Common myeloid progenitor, CD34-positive (primary cell): ENCODE measurements at regions of chr1 and their contacts with region 1.

Region 1: GRCh38 chr1:113140588-113141446 is 67.8 kb downstream of the LRIG2 start:
- DNase-seq: peak; percentile 60 to 79 (median 74)
- H3K4me3 ChIP-seq: peak overlapping the region in 5 of 7 experiments; percentile 12 to 70 (median 34)
- H3K27ac ChIP-seq: no peak overlapping the region
- H3K4me1 ChIP-seq: peaks cover 0 to 12% (median 8%) of the 10 kb centered on the region in 4 experiments
- H3K27me3 ChIP-seq: peaks cover 0 to 2% (median 0%) of the 10 kb centered on the region in 5 experiments

Region 2: DNA sequence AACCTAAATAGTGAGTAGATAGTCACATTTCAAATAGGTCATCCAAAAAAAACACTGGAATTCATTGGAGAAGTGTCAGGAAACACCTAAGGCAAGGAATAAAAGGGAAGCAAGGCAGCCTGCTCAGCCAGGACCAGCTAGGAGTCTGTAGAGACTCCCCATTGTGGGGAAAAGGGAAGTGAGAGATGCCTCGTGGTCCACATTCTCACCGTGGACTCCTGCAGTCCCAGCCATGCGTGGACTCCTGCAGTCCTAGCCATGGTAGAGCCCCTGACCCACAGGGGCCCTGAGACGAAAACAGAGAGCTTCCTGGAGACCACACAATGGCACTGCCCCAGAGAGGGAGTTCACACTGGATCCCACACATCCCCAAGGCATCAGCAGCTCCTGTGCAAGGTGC is 29.7 kb after region 1 on chr1:
- CTCF ChIA-PET with region 1: no interaction called
- POLR2A ChIA-PET with region 1: no interaction called
- DNase-seq: no peak
- H3K4me3 ChIP-seq: no peak overlapping the region
- H3K27ac ChIP-seq: no peak overlapping the region
- H3K4me1 ChIP-seq: no peaks in the 10 kb centered on the region
- H3K27me3 ChIP-seq: no peaks in the 10 kb centered on the region

Region 3: GRCh38 chr1:113303267-113303666 is 162.4 kb after region 1 on chr1:
- CTCF ChIA-PET with region 1: no interaction called
- POLR2A ChIA-PET with region 1: no interaction called
- DNase-seq: no peak
- H3K4me3 ChIP-seq: no peak overlapping the region
- H3K27ac ChIP-seq: no peak overlapping the region
- H3K4me1 ChIP-seq: no peaks in the 10 kb centered on the region
- H3K27me3 ChIP-seq: no peaks in the 10 kb centered on the region

Region 4: GRCh38 chr1:113452921-113453770 is 312.3 kb after region 1 on chr1:
- CTCF ChIA-PET with region 1: interaction called, 19 read pairs
- POLR2A ChIA-PET with region 1: interaction called, 3 read pairs
- DNase-seq: peak; percentile 34 to 62 (median 60)
- H3K4me3 ChIP-seq: no peak overlapping the region
- H3K27ac ChIP-seq: no peak overlapping the region
- H3K4me1 ChIP-seq: peaks cover 0 to 10% (median 0%) of the 10 kb centered on the region in 4 experiments
- H3K27me3 ChIP-seq: no peaks in the 10 kb centered on the region

Region 5: GRCh38 chr1:113677250-113678158 is 536.7 kb after region 1 on chr1:
- CTCF ChIA-PET with region 1: interaction called, 32 read pairs
- POLR2A ChIA-PET with region 1: no interaction called
- DNase-seq: peak; percentile 61 to 77 (median 76)
- H3K4me3 ChIP-seq: no peak overlapping the region
- H3K27ac ChIP-seq: no peak overlapping the region
- H3K4me1 ChIP-seq: no peaks in the 10 kb centered on the region
- H3K27me3 ChIP-seq: no peaks in the 10 kb centered on the region